Sigmoid colon (tissue), 7 donors: ENCODE measurements at regions of chr16 and their contacts with region 1.

Region 1: GRCh38 chr16:87950765-87951549 is at the start of gene BANP:
- DNase-seq: peak; percentile 99
- H3K4me3 ChIP-seq: peak within 1 kb of the TSS; percentile 83 to 99 (median 95)
- H3K27ac ChIP-seq: peak within 1 kb of the TSS; percentile 94 to 100 (median 97)
- H3K4me1 ChIP-seq: peaks cover 0 to 44% (median 25%) of the 10 kb centered on the region in 4 donors
- H3K27me3 ChIP-seq: no peaks in the 10 kb centered on the region
- CTCF ChIP-seq: peak in 3 of 4 experiments; percentile 29 to 37 (median 36)
- EP300 ChIP-seq: no peak
- POLR2A ChIP-seq: no peak
- total RNA-seq, gene BANP: 17.4 to 31.0 (median 23.0) TPM

Region 2: DNA sequence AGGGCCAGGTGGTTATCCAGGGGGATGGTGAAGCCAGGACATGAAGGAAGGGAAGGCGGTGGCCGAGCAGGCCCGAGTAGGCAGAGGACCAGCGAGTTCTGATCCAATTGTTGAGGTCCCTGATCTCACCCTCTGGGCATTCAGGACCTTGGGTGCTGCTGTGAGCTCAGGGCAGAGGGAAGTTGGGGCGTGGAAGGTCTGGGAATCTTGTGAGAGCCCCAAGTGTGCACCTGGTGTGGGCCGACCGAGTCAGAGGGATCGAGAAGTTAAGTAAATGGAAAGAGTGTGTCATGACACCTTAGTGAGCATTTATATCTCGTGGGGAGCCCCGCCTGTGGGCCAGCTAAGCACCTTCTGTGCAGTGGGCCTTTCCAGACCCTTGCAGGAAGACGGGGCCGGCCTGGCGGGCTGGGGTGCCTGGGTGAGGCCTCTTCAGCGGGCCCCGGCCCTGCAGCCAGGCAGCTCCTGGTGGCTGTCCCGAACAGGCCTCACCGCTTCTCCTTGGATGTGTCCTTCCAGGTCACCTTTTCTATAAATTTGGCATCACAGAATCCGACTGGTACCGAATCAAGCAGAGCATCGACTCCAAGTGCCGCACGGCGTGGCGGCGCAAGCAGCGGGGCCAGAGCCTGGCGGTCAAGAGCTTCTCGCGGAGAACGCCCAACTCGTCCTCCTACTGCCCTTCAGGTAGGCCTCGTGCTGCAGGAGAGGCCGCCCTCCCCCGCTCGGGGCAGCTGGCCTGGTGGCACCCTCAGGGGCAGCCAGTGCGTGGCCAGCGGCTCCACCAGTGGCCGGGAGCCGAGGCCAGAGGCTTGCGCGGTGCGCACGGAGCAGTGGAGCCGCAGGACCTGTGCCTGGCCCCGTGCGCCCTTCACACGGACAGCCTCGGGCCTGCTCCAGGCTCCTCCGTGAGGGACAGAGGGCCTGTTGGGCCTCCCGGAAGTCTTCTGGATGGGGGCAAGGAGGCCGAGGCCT is 76.3 kb after region 1 on chr16:
- intact Hi-C with region 1: no loop called
- DNase-seq: no peak
- H3K4me3 ChIP-seq: no peak overlapping the region
- H3K27ac ChIP-seq: no peak overlapping the region
- H3K4me1 ChIP-seq: peaks cover 0 to 18% (median 4%) of the 10 kb centered on the region in 4 donors
- H3K27me3 ChIP-seq: no peaks in the 10 kb centered on the region
- CTCF ChIP-seq: no peak
- EP300 ChIP-seq: no peak
- POLR2A ChIP-seq: no peak

Region 3: DNA sequence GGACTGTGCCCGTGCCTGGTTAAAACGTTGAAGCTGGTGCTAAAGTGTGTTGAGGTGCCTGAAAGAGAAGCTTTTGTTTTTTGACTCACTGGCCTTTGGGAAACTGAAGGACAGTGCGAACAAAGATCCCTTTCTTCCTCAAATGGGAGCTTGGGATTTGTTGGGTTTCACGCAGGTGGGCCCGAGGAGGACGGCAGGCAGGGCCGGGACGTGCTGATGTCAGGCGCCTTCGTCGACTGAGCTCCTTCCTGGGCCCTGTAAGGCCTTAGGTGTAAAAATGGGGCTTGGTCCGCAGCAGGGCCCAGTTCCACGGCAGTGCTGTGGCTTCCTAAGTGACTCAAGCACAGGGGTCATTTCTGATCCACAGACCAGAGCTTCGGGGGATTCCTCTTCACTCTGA is 107.2 kb after region 1 on chr16:
- intact Hi-C with region 1: no loop called
- DNase-seq: peak; percentile 53
- H3K4me3 ChIP-seq: no peak overlapping the region
- H3K27ac ChIP-seq: no peak overlapping the region
- H3K4me1 ChIP-seq: peaks cover 0 to 15% (median 13%) of the 10 kb centered on the region in 4 donors
- H3K27me3 ChIP-seq: no peaks in the 10 kb centered on the region
- CTCF ChIP-seq: no peak
- EP300 ChIP-seq: no peak
- POLR2A ChIP-seq: no peak

Region 4: DNA sequence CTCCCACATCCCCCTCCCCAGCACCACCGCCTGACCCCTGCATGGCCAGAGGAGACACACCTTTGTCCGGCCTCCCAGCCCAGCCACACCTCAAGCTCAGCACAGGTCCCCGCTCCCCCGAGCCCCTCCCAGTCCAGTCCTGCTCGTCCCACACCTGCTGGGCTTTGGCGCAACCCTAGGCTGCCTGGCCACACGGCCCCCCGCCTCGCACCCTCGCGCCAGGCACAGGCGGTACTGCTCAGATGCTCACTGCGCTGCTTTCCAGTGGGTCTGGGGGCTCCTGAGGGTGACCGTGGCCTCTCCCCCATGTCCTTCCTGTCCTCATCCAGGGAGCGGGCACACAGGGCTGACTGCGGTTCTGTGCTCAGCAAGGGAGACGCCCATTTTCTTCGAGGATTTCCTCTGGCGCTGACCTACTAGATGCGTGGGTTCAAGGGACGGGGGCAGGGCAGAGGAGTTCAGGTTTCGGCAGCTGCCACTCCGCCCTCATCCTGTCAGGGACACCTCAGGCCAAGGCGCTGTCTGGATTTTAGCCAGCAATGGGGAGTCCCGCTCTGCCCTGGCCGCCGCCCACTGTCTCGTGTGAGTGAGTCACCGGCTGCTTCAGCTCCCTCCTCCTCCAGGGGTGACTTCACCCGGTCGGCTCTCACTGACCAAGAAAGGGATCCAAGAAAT is 313.8 kb after region 1 on chr16:
- intact Hi-C with region 1: loop called (anchors 10 kb)
- DNase-seq: peak; percentile 99
- H3K4me3 ChIP-seq: peak overlapping the region in 3 of 4 donors; percentile 17 to 25 (median 20)
- H3K27ac ChIP-seq: peak overlapping the region in 3 of 4 donors; percentile 53 to 77 (median 64)
- H3K4me1 ChIP-seq: peaks cover 0 to 42% (median 40%) of the 10 kb centered on the region in 4 donors
- H3K27me3 ChIP-seq: no peaks in the 10 kb centered on the region
- CTCF ChIP-seq: no peak
- EP300 ChIP-seq: peak in 2 of 4 donors; percentile 6 to 73
- POLR2A ChIP-seq: no peak

Region 5: GRCh38 chr16:88452482-88453216 is 501.7 kb after region 1 on chr16:
- intact Hi-C with region 1: loop called (anchors 10 kb)
- DNase-seq: peak; percentile 97
- H3K4me3 ChIP-seq: peak overlapping the region; percentile 39 to 59 (median 55)
- H3K27ac ChIP-seq: peak overlapping the region; percentile 53 to 73 (median 66)
- H3K4me1 ChIP-seq: peaks cover 0 to 38% (median 35%) of the 10 kb centered on the region in 4 donors
- H3K27me3 ChIP-seq: peaks cover 23 to 41% (median 38%) of the 10 kb centered on the region in 3 donors
- CTCF ChIP-seq: no peak
- EP300 ChIP-seq: no peak
- POLR2A ChIP-seq: no peak